ENCODE measurements at regions of chr9 and their contacts with region 1.

Region 1: DNA sequence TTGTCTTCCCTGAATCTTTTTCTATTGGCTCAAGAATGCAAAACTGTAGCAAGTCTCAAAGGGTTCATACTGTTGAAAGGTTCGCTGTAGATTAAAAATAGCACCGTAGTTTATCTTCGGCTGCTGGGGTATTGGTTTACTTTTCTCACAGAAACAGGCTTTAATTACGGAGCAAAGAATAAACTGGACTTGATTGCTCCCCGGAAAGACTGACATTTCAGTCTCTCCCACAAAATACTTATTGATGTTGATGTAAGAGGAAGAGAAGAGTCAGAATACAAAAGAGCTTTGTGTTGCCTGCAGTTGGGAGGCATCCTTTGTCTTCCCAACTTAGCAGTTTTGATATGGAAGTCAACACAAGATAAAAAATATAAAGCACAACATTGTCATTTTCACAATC is 183.9 kb upstream of the DMAC1 start:
- DNase-seq: no peak
- ATAC-seq: no peak
- H3K4me3 ChIP-seq: no peak overlapping the region
- H3K27ac ChIP-seq: no peak overlapping the region
- H3K4me1 ChIP-seq: no peaks in the 10 kb centered on the region
- H3K27me3 ChIP-seq: no peaks in the 10 kb centered on the region
- CTCF ChIP-seq: no peak
- EP300 ChIP-seq: no peak
- POLR2A ChIP-seq: no peak
- RAD21 ChIP-seq: no peak

Region 2: GRCh38 chr9:7816021-7816420 is 167.5 kb before region 1 on chr9:
- CTCF ChIA-PET with region 1: no interaction called
- POLR2A ChIA-PET with region 1: no interaction called
- RAD21 ChIA-PET with region 1: no interaction called
- SMC1A ChIA-PET with region 1: no interaction called
- in situ Hi-C with region 1: no loop called
- intact Hi-C with region 1: no loop called
- DNase-seq: no peak
- ATAC-seq: no peak
- H3K4me3 ChIP-seq: no peak overlapping the region
- H3K27ac ChIP-seq: no peak overlapping the region
- H3K4me1 ChIP-seq: no peaks in the 10 kb centered on the region
- H3K27me3 ChIP-seq: no peaks in the 10 kb centered on the region
- CTCF ChIP-seq: no peak
- EP300 ChIP-seq: no peak
- POLR2A ChIP-seq: no peak
- RAD21 ChIP-seq: no peak

Region 3: DNA sequence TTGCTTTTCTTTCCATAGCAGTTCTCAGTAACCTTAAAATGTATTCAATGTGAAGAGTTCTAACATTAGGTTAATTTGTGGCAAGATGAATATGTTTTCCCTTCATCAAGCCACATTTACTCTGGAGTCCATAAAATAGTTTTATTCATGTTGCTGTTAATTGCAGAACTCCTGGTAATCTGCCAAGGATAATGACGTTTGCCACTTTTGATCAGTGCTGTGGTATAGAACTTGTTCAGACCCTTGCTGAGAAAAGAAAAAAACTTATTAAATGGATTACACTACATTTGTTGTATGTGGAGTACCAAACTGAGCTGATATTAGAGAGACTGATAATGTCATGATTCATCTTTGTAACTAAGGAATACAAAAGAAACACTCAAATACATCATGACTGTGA is 28.5 kb after region 1 on chr9:
- CTCF ChIA-PET with region 1: no interaction called
- POLR2A ChIA-PET with region 1: interaction called, 7 read pairs
- RAD21 ChIA-PET with region 1: no interaction called
- SMC1A ChIA-PET with region 1: no interaction called
- in situ Hi-C with region 1: no loop called
- intact Hi-C with region 1: loop called (anchors 2 kb)
- DNase-seq: no peak
- ATAC-seq: no peak
- H3K4me3 ChIP-seq: no peak overlapping the region
- H3K27ac ChIP-seq: no peak overlapping the region
- H3K4me1 ChIP-seq: no peaks in the 10 kb centered on the region
- H3K27me3 ChIP-seq: no peaks in the 10 kb centered on the region
- CTCF ChIP-seq: no peak
- EP300 ChIP-seq: no peak
- POLR2A ChIP-seq: no peak
- RAD21 ChIP-seq: no peak

Region 4: GRCh38 chr9:8036914-8037524 is 53.5 kb after region 1 on chr9:
- CTCF ChIA-PET with region 1: no interaction called
- POLR2A ChIA-PET with region 1: no interaction called
- RAD21 ChIA-PET with region 1: no interaction called
- SMC1A ChIA-PET with region 1: no interaction called
- in situ Hi-C with region 1: no loop called
- intact Hi-C with region 1: no loop called
- DNase-seq: no peak
- ATAC-seq: no peak
- H3K4me3 ChIP-seq: no peak overlapping the region
- H3K27ac ChIP-seq: no peak overlapping the region
- H3K4me1 ChIP-seq: no peaks in the 10 kb centered on the region
- H3K27me3 ChIP-seq: no peaks in the 10 kb centered on the region
- CTCF ChIP-seq: no peak
- EP300 ChIP-seq: no peak
- POLR2A ChIP-seq: no peak
- RAD21 ChIP-seq: no peak

Measured in GM12878 (cell line).